Activated naive CD4-positive, alpha-beta T cell treated with anti-CD3 and anti-CD28 coated beads, Interleukin-2, amount 10 ng/mL, durations not matched to agents 7 days and 5 days (primary cell): ENCODE measurements at regions of chr9 and their contacts with region 1.

Region 1: DNA sequence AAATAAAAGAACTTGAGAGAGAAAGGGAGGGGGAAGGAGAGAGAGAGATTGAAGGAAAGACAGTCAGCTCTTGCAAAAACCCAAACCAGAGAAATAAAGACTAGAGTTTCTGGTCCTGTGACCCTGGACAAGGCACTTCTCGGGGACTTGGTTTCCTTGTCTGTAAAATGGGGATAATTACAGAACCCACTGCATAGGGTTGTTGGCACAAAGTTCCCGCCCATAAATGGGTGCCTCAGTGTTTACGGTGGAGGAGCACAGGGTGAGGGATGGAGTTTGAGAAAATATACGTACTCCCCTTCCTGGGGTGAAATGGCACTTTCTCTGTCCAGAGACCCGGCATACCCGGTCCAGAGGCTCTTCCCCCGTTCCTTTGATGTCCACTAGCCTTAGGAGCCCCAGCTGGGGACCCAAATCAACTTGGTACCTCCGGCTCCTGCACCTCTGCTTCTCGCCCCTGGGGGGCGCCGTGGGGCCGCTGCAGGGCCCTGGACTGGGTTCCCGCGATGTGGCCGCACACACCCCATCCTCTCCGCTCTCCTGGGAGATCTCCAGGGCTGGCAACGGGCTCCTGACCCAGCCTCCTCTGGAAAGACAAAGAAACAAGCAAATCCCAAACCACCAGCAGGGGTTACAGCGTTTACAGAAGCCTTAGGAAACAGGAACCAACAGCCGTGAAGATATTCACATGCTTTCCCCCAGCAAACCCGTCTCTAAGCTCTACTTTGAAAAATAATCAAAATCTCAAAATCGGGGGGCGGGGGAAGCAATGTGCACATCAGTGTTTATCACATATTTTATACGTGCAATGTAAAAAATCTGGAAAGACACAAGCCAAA is 26.3 kb downstream of the PTGES start:
- DNase-seq: peak; percentile 69
- H3K4me3 Mint-ChIP-seq: no peak overlapping the region
- H3K27ac Mint-ChIP-seq: no peak overlapping the region
- H3K4me1 Mint-ChIP-seq: peaks cover 3% of the 10 kb centered on the region
- H3K27me3 Mint-ChIP-seq: peaks cover 56% of the 10 kb centered on the region

Region 2: GRCh38 chr9:129641746-129642513 is 84.6 kb before region 1 on chr9 and contains the start of gene ASB6:
- CTCF ChIA-PET with region 1: interaction called, 12 read pairs
- DNase-seq: peak; percentile 94
- H3K4me3 Mint-ChIP-seq: peak within 1 kb of the TSS; percentile 72
- H3K27ac Mint-ChIP-seq: peak within 1 kb of the TSS; percentile 86
- H3K4me1 Mint-ChIP-seq: peaks cover 23% of the 10 kb centered on the region
- H3K27me3 Mint-ChIP-seq: no peaks in the 10 kb centered on the region

Region 3: GRCh38 chr9:129712634-129713401 is 13.7 kb before region 1 on chr9:
- CTCF ChIA-PET with region 1: interaction called, 29 read pairs
- DNase-seq: no peak
- H3K4me3 Mint-ChIP-seq: no peak overlapping the region
- H3K27ac Mint-ChIP-seq: no peak overlapping the region
- H3K4me1 Mint-ChIP-seq: peaks cover 31% of the 10 kb centered on the region
- H3K27me3 Mint-ChIP-seq: peaks cover 57% of the 10 kb centered on the region

Region 4: DNA sequence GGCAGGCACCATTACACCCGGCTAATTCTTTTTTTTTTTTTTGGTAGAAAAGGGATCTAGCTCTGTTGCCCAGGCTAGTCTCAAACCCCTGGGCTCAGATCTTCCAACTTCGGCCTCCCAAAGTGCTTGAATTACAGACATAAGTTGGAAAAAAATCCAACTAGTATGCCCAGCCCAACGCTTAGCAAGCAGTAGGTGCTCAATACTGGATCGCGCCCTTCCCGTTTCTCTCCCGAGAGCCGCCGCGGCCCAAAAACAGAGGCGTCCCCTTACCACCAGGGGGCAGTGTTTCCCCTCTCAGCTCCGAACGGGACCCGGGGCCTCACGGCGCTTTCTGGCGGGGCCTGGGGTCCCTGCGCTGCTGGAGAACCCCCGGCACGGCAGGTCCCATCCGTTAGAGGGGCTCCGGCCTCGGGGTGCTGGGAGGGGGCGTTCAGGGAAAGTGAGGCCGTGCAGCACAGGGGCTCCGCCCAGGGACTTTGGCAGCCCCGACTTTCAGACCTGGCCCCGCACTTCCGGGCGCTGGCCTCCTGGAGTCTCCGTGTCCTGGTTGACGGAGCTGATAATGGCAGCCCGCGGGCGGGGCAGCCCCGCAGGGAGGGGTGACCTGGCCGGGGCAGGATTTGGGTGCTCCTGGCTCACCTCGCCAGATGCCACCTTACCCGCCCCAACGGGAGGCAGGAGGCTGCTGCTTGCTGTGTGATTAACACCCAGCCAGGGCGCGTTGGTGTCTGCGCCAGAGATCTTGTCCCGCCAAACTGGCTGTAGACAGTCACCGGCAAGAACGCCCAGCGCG is 11.1 kb after region 1 on chr9:
- CTCF ChIA-PET with region 1: interaction called, 26 read pairs
- DNase-seq: peak; percentile 90
- H3K4me3 Mint-ChIP-seq: peak overlapping the region; percentile 65
- H3K27ac Mint-ChIP-seq: peak overlapping the region; percentile 80
- H3K4me1 Mint-ChIP-seq: peaks cover 16% of the 10 kb centered on the region
- H3K27me3 Mint-ChIP-seq: peaks cover 44% of the 10 kb centered on the region

Region 5: DNA sequence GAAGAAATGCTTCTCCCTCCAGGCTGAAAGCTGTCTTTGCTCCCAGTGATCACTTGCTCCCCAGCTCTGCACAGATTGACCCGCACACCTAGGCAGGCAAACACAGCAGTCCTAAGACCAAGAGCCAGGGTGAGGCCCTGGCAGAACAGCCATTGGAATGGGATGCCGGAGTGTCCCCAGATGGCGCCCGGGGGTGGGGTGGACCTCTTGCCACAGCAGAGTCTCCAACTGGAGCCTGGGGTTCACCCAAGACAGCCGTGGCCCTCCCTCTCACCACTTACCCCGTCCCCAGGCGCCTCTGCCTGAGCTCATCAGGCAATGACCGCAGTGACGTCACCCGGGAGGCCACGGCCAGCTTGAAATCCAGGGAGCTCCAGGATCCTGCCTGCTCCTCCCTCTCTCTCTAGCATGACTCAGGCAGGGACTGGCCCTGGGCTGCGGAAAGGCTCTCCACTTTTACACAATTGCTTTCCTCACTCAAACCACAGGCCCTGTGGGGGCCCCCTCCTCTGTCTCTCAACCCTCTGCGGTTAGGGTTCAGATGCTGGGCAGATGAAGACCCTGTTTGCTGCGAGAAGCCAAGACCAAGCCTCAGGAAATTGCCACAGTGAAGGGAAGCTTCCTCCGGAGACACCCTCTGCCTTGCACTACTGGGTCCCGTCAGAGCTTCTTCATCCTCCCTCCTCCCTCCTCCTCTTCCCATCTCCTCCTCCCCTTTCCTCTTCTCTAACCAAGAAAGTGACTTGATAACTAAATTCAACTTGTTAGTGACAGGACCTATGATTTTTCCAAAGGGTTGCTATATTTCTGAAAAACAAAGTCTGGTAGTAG is 50.6 kb after region 1 on chr9:
- CTCF ChIA-PET with region 1: interaction called, 61 read pairs
- DNase-seq: peak; percentile 55
- H3K4me3 Mint-ChIP-seq: no peak overlapping the region
- H3K27ac Mint-ChIP-seq: no peak overlapping the region
- H3K4me1 Mint-ChIP-seq: peaks cover 13% of the 10 kb centered on the region
- H3K27me3 Mint-ChIP-seq: peaks cover 60% of the 10 kb centered on the region

Region 6: GRCh38 chr9:129783516-129784361 is 57.2 kb after region 1 on chr9:
- CTCF ChIA-PET with region 1: interaction called, 61 read pairs
- DNase-seq: peak; percentile 82
- H3K4me3 Mint-ChIP-seq: no peak overlapping the region
- H3K27ac Mint-ChIP-seq: no peak overlapping the region
- H3K4me1 Mint-ChIP-seq: peaks cover 3% of the 10 kb centered on the region
- H3K27me3 Mint-ChIP-seq: peaks cover 59% of the 10 kb centered on the region